Posterior vena cava (tissue), 2 donors: ENCODE measurements at regions of chr9 and their contacts with region 1.

Region 1: GRCh38 chr9:1775230-1775629 is 239.9 kb upstream of the SMARCA2 start:
- DNase-seq: no peak

Region 2: GRCh38 chr9:1470001-1470804 is 305.0 kb before region 1 on chr9:
- intact Hi-C with region 1: loop called in 1 of 2 experiments (anchors 2 kb)
- DNase-seq: no peak